ENCODE measurements at regions of chr21 and their contacts with region 1.

Region 1: GRCh38 chr21:36209626-36210171 is 53.1 kb downstream of the DOP1B start:
- DNase-seq: peak; percentile 68
- ATAC-seq: peak; percentile 73
- H3K4me3 Mint-ChIP-seq: no peak overlapping the region
- H3K27ac Mint-ChIP-seq: peak overlapping the region; percentile 48; the same call in 1 of the 2 replicates
- H3K4me1 Mint-ChIP-seq: peaks cover 13% of the 10 kb centered on the region
- H3K27me3 Mint-ChIP-seq: no peaks in the 10 kb centered on the region
- CTCF ChIP-seq: peak; percentile 35; the same call in 1 of the 2 replicates

Region 2: GRCh38 chr21:36141513-36141925 is 68.2 kb before region 1 on chr21:
- CTCF ChIA-PET with region 1: interaction called, 63 read pairs
- POLR2A ChIA-PET with region 1: no interaction called
- DNase-seq: peak; percentile 86
- ATAC-seq: peak; percentile 96
- H3K4me3 Mint-ChIP-seq: no peak overlapping the region
- H3K27ac Mint-ChIP-seq: 0 out of 2 replicates have a peak overlapping the region, but pooled peaks have one; percentile 5
- H3K4me1 Mint-ChIP-seq: peaks cover 21% of the 10 kb centered on the region
- H3K27me3 Mint-ChIP-seq: peaks cover 2% of the 10 kb centered on the region
- CTCF ChIP-seq: peak; percentile 88

Region 3: DNA sequence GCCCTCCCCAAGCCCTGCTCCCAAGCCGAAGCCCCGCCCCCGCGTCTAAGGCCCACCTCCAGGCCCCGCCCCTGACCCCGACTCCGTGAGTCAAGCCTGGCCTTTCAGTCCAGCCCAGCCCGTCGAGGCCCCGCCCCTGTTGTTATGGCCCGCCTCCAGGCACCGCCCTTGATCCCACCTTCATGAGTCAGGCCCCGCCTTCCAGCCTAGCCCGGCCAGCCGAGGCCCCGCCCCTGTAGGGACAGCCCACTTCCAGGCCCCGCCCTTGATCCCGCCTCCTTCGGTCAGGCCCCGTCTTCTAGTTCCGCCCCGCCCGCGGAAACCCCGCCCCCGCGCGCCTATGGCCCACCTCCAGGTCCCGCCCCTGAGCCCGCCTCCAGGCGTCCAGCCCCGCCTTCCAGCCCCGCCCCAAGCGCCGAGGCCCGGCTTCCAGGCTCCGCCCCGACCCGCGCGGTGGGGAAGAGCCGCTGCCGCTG is 53.3 kb before region 1 on chr21:
- CTCF ChIA-PET with region 1: interaction called, 59 read pairs
- POLR2A ChIA-PET with region 1: interaction called, 4 read pairs
- DNase-seq: peak; percentile 100
- ATAC-seq: peak; percentile 94
- H3K4me3 Mint-ChIP-seq: peak overlapping the region; percentile 73
- H3K27ac Mint-ChIP-seq: no peak overlapping the region
- H3K4me1 Mint-ChIP-seq: peaks cover 11% of the 10 kb centered on the region
- H3K27me3 Mint-ChIP-seq: peaks cover 38% of the 10 kb centered on the region
- CTCF ChIP-seq: no peak

Region 4: DNA sequence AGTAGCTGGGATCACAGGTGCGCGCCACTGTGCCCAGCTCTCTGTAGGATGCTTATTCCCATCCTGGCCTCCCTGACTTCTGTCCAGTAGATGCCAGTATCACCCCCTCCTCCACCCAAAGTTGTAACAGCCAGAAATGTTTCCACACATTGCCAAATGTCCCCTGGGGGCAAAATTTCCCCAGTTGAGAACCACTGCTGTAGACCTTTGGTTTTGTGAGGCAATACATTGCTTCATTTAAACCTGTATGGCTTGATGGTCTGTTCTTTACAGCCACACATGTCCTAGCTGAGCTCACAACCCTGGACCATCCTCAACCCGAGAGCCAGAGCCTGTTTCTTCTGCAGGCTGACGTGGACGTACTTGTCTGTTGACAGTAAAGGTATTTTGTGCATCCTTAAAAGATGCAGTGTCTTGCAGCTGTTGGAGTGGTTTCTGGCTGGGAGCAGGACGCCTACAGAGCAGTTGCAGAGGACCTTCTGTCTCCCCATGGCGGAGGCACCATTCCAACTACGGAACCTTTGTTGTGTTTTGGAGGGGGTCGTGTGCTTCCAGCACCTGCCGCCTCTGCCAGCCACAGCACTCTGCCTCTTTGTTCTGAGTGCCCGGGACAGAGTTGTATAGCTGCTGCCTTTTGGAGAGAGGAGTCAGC is 26.4 kb before region 1 on chr21:
- CTCF ChIA-PET with region 1: interaction called, 10 read pairs
- POLR2A ChIA-PET with region 1: no interaction called
- DNase-seq: no peak
- ATAC-seq: no peak
- H3K4me3 Mint-ChIP-seq: no peak overlapping the region
- H3K27ac Mint-ChIP-seq: no peak overlapping the region
- H3K4me1 Mint-ChIP-seq: peaks cover 2% of the 10 kb centered on the region
- H3K27me3 Mint-ChIP-seq: no peaks in the 10 kb centered on the region
- CTCF ChIP-seq: no peak

Region 5: GRCh38 chr21:36223451-36223850 is 13.8 kb after region 1 on chr21:
- CTCF ChIA-PET with region 1: interaction called, 10 read pairs
- POLR2A ChIA-PET with region 1: no interaction called
- DNase-seq: no peak
- ATAC-seq: no peak
- H3K4me3 Mint-ChIP-seq: no peak overlapping the region
- H3K27ac Mint-ChIP-seq: no peak overlapping the region
- H3K4me1 Mint-ChIP-seq: no peaks in the 10 kb centered on the region
- H3K27me3 Mint-ChIP-seq: no peaks in the 10 kb centered on the region
- CTCF ChIP-seq: no peak